OCI-LY7 (cell line): ENCODE measurements at regions of chr11 and their contacts with region 1.

Region 1: DNA sequence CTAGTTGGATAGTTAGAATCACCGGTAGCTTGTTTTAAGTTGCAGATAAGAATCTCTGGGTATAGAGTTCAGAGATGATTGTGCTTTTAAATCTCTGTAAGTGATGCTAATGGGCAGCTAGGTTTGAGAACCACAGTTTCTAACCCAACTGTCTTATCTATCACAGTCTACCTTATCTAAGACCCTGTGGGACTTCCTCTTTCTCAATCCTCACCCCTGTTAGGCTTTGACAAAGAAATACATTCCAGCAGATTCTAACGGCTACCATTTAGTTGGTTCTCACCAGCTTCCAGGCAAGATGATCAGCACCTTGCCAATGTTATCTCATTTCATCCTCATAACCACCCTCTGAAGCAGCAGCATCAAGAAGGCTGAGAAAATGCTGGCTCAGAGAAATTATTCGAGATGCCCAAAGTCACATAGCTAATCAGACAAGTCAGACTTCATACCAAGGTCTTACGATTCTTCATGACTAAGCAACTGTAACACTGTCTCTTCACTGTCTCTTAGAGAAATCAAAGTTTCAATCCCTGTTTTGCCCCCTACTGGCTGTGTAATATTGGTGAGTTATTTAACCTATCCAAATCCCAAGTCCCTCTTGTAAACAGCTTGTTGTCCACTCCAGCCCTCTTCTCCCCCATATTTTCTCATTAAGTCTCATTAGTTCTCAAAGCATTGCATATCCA is 192.4 kb upstream of the API5 start:
- DNase-seq: no peak
- H3K4me3 ChIP-seq: no peak overlapping the region
- H3K27ac ChIP-seq: no peak overlapping the region
- H3K4me1 ChIP-seq: no peaks in the 10 kb centered on the region
- CTCF ChIP-seq: 0 out of 2 replicates have a peak, but pooled peaks have one; percentile 30

Region 2: GRCh38 chr11:42951240-42951639 is 168.2 kb before region 1 on chr11:
- CTCF ChIA-PET with region 1: no interaction called
- POLR2A ChIA-PET with region 1: no interaction called
- intact Hi-C with region 1: no loop called
- DNase-seq: no peak
- H3K4me3 ChIP-seq: no peak overlapping the region
- H3K27ac ChIP-seq: no peak overlapping the region
- H3K4me1 ChIP-seq: no peaks in the 10 kb centered on the region
- CTCF ChIP-seq: no peak

Region 3: DNA sequence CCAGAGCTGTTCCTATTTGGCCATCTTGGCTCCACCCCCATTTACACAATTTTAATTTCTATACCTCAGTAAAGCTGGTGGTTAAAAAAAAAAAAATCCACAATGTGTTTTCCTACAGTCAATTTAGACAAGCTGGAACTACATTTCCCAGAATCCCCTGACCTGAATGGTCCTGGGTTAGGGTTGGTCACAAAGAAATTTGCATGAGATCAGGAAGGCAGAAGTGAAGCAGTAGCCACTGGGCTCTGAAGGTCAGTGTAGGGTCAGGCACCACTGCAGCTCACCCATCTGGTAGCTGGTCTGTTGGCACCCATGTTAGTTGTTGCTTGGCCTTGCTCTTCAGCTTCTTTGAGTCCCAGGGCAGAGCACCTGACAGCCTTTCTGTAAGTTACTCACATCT is 18.3 kb before region 1 on chr11:
- CTCF ChIA-PET with region 1: no interaction called
- POLR2A ChIA-PET with region 1: no interaction called
- intact Hi-C with region 1: loop called (anchors 1 kb)
- DNase-seq: no peak
- H3K4me3 ChIP-seq: no peak overlapping the region
- H3K27ac ChIP-seq: no peak overlapping the region
- H3K4me1 ChIP-seq: no peaks in the 10 kb centered on the region
- CTCF ChIP-seq: no peak